A673 (cell line): ENCODE measurements at regions of chr21 and their contacts with region 1.

Region 1: DNA sequence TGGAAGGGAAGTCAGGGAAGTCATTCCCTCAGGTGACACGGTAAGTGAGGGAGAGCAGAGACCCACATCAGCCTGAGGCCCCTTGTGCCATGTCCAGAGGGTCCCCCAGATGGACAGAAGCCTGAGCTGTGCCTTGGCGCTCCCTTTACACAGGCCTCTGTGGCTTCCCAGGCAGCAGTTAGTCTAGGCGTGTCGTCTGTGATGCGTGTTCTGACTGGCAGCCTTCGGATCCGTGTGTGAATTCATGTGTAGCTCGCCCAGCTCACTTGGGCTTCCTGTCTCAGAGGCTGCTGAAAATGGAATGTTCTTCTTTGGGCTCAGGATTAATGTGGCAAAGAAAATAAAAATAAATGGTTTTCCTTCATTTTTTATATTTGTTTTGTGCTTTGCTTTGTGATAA is 28.3 kb downstream of the PRMT2 start:
- DNase-seq: no peak
- H3K4me3 ChIP-seq: no peak overlapping the region
- H3K27ac ChIP-seq: no peak overlapping the region
- H3K4me1 ChIP-seq: peaks cover 4% of the 10 kb centered on the region
- H3K27me3 ChIP-seq: no peaks in the 10 kb centered on the region
- CTCF ChIP-seq: no peak

Region 2: DNA sequence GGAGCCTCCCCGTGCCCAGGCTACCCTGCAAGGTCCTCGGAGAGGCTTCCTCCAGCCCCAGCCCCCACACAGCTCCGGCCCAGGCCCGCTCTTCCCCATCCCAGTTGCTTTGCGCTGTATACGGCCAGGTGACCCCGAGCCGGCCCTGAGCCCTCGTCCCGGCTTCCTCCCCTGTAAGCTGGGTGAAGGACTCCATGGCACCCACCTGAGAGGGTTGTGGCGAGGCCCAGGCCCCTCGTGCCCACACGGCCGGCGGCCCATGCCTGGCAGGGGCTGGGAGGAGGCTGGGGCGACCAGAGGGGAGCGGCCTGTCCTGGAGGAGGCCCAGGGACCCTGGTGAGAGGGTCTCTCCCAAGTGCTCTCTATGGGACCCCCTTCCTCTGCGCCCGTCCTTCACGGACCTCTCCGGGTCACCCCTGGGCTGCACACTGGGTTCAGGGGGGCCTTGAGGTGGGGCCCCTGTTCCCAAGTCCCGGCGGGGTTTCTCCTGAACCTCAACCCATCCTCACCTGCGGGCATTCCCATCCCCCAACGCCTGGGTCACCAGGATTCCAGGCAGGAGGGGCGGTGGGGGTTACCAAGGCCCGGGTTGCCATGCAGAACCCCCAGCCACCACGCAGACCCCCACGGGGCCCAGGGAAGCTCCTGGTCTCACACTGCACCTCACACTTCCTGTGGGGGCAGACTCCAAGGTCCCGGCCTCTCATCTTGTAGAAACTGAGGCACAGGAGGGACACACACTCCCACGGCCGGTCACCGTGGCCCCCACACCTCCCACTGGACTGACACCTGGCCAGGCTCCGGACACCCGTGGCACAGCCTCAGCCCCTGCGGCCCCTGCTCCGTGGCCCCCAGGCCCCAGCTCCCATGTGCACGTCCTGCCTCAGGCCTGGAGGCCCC is 657.0 kb before region 1 on chr21:
- CTCF ChIA-PET with region 1: no interaction called
- POLR2A ChIA-PET with region 1: no interaction called
- intact Hi-C with region 1: no loop called
- DNase-seq: no peak
- H3K4me3 ChIP-seq: no peak overlapping the region
- H3K27ac ChIP-seq: no peak overlapping the region
- H3K4me1 ChIP-seq: no peaks in the 10 kb centered on the region
- H3K27me3 ChIP-seq: no peaks in the 10 kb centered on the region
- CTCF ChIP-seq: no peak

Region 3: GRCh38 chr21:46635324-46636172 is 28.2 kb before region 1 on chr21 and contains the start of gene PRMT2:
- CTCF ChIA-PET with region 1: interaction called, 4 read pairs
- POLR2A ChIA-PET with region 1: interaction called, 11 read pairs
- intact Hi-C with region 1: no loop called
- DNase-seq: peak; percentile 97
- H3K4me3 ChIP-seq: peak within 1 kb of the TSS; percentile 94
- H3K27ac ChIP-seq: peak within 1 kb of the TSS; percentile 93
- H3K4me1 ChIP-seq: peaks cover 19% of the 10 kb centered on the region
- H3K27me3 ChIP-seq: no peaks in the 10 kb centered on the region
- CTCF ChIP-seq: no peak
- total RNA-seq, gene PRMT2: 86.4 and 88.0 TPM in 2 replicates